Gastrocnemius medialis (tissue), 4 donors: ENCODE measurements at regions of chr9 and their contacts with region 1.

Region 1: DNA sequence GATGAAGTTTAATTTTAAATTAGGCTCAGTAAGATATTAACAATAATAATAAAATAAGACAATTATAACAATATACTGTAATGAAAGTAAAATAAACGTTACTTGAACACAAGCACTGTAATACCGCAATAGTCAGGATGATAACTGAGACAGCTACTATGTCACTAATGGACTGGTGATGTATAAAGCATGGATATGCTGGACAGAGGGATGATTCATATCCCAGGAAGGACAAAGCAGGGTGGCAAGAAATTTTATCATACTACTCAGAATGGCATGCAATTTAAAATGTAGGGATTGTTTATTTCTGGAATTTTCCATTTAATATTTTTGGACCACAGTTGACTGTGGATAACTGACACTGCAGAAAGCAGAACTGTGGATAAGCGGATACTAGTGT is 196.9 kb downstream of the VPS13A start:
- DNase-seq: no peak
- ATAC-seq: no peak
- H3K4me3 ChIP-seq: no peak overlapping the region
- H3K27ac ChIP-seq: no peak overlapping the region
- H3K4me1 ChIP-seq: no peaks in the 10 kb centered on the region
- H3K27me3 ChIP-seq: no peaks in the 10 kb centered on the region
- CTCF ChIP-seq: no peak
- POLR2A ChIP-seq: no peak

Region 2: GRCh38 chr9:77224746-77225312 is 149.4 kb before region 1 on chr9:
- in situ Hi-C with region 1: loop called in 1 of 4 experiments (anchors 25 kb)
- intact Hi-C with region 1: no loop called
- DNase-seq: no peak
- ATAC-seq: no peak
- H3K4me3 ChIP-seq: no peak overlapping the region
- H3K27ac ChIP-seq: no peak overlapping the region
- H3K4me1 ChIP-seq: no peaks in the 10 kb centered on the region
- H3K27me3 ChIP-seq: no peaks in the 10 kb centered on the region
- CTCF ChIP-seq: no peak
- POLR2A ChIP-seq: no peak

Region 3: DNA sequence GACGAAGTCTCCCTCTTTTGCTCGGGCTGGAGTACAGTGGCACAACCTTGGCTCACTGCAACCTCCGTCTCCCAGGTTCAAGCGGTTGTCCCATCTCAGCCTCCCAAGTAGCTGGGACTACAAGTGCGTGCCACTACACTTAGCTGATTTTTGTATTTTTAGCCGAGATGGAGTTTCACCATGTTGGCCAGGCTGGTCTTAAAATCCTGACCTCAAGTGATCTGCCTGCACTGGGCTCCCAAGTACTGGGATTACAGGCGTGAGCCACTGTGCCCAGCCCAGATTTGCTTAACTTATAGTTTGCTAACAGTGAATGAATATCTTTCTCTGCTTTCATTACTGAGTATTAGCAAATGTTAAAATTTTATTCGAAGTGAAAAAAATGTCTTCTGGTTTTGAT is 112.7 kb before region 1 on chr9:
- in situ Hi-C with region 1: no loop called
- intact Hi-C with region 1: no loop called
- DNase-seq: peak in 1 of 2 donors; percentile 43
- ATAC-seq: peak; percentile 39 to 80
- H3K4me3 ChIP-seq: no peak overlapping the region
- H3K27ac ChIP-seq: no peak overlapping the region
- H3K4me1 ChIP-seq: peaks cover 0 to 3% of the 10 kb centered on the region in 2 donors
- H3K27me3 ChIP-seq: no peaks in the 10 kb centered on the region
- CTCF ChIP-seq: no peak
- POLR2A ChIP-seq: no peak

Region 4: GRCh38 chr9:77316058-77316457 is 58.2 kb before region 1 on chr9:
- in situ Hi-C with region 1: loop called in 1 of 4 experiments (anchors 5 kb)
- intact Hi-C with region 1: no loop called
- DNase-seq: no peak
- ATAC-seq: no peak
- H3K4me3 ChIP-seq: no peak overlapping the region
- H3K27ac ChIP-seq: no peak overlapping the region
- H3K4me1 ChIP-seq: no peaks in the 10 kb centered on the region
- H3K27me3 ChIP-seq: no peaks in the 10 kb centered on the region
- CTCF ChIP-seq: no peak
- POLR2A ChIP-seq: no peak

Region 5: DNA sequence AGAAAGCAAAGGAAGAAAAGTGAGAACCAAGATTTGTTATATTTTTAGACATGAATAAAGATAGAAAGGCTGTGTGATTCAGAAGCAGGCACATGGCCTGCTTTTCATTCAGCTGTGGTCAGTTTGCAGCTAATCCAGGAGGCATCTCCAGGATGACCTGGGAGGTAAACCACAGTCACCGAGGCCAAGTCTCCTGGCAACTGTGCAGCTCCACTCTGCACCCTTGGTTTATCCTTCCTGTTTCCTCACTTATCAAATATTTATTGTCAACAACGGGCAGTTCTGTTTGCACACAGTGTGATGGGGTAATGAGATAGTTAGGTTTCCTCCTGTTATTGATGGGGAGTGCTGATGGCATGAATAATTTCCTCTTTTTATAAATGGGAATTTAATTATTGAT is 1165.6 kb after region 1 on chr9:
- in situ Hi-C with region 1: no loop called
- intact Hi-C with region 1: no loop called
- DNase-seq: peak; percentile 63 to 79
- ATAC-seq: peak; percentile 98 to 99
- H3K4me3 ChIP-seq: no peak overlapping the region
- H3K27ac ChIP-seq: peak overlapping the region in 3 of 4 donors; percentile 64 to 76 (median 65)
- H3K4me1 ChIP-seq: peaks cover 7 to 9% of the 10 kb centered on the region in 2 donors
- H3K27me3 ChIP-seq: no peaks in the 10 kb centered on the region
- CTCF ChIP-seq: no peak
- POLR2A ChIP-seq: no peak